Activated T-helper 1 cell treated with anti-CD3 and anti-CD28 coated beads, Interleukin-12 subunit alpha, Interleukin-12 subunit beta, Interleukin-2, Interleukin-4 antibody, amounts not matched to agents 30 ng/mL and 10 ng/mL and 1 ng/mL, durations not matched to agents 14 hours and 24 hours and 36 hours (primary cell): ENCODE measurements at regions of chr11 and their contacts with region 1.

Region 1: GRCh38 chr11:95067039-95067840 is 521 bp downstream of the SRSF8 start:
- DNase-seq: peak; percentile 72
- H3K4me3 Mint-ChIP-seq: peak overlapping the region; percentile 95
- H3K27ac Mint-ChIP-seq: peak overlapping the region; percentile 96
- H3K4me1 Mint-ChIP-seq: peaks cover 28% of the 10 kb centered on the region
- H3K27me3 Mint-ChIP-seq: peaks cover 23% of the 10 kb centered on the region

Region 2: GRCh38 chr11:94134651-94135512 is 932.4 kb before region 1 on chr11:
- intact Hi-C with region 1: loop called (anchors 10 kb)
- DNase-seq: peak; percentile 9
- H3K4me3 Mint-ChIP-seq: peak overlapping the region; percentile 60
- H3K27ac Mint-ChIP-seq: peak overlapping the region; percentile 45
- H3K4me1 Mint-ChIP-seq: peaks cover 48% of the 10 kb centered on the region
- H3K27me3 Mint-ChIP-seq: no peaks in the 10 kb centered on the region

Region 3: GRCh38 chr11:94543695-94544645 is 523.3 kb before region 1 on chr11 and contains the start of gene FUT4:
- intact Hi-C with region 1: loop called (anchors 5 kb)
- DNase-seq: peak; percentile 70
- H3K4me3 Mint-ChIP-seq: peak within 1 kb of the TSS; percentile 98
- H3K27ac Mint-ChIP-seq: peak within 1 kb of the TSS; percentile 99
- H3K4me1 Mint-ChIP-seq: peaks cover 45% of the 10 kb centered on the region
- H3K27me3 Mint-ChIP-seq: peaks cover 5% of the 10 kb centered on the region
- total RNA-seq, gene FUT4: 8.0 and 8.6 TPM in 2 replicates

Region 4: DNA sequence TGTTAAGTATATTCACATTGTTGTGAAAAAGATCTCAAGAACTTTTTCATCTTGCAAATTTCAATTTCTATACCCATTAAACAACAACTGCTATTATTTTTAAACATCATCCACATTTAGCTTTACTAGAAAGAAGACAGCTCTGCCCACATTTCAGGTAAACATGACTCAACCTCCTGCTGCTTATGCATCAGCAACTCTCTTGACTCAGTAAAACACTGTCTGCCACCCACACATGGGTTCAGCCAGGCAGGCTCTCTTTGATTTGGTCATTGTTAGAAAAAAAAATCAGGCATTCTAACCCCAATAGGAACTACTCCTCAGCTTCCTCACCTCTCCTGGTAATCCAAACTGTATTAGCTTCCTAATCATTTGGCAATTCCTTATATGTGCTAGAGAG is 17.3 kb after region 1 on chr11:
- intact Hi-C with region 1: loop called (anchors 1 kb)
- DNase-seq: peak; percentile 32
- H3K4me3 Mint-ChIP-seq: no peak overlapping the region
- H3K27ac Mint-ChIP-seq: peak overlapping the region; percentile 40
- H3K4me1 Mint-ChIP-seq: peaks cover 70% of the 10 kb centered on the region
- H3K27me3 Mint-ChIP-seq: no peaks in the 10 kb centered on the region

Region 5: GRCh38 chr11:95138448-95138847 is 71.2 kb after region 1 on chr11:
- intact Hi-C with region 1: loop called (anchors 1 kb)
- DNase-seq: no peak
- H3K4me3 Mint-ChIP-seq: no peak overlapping the region
- H3K27ac Mint-ChIP-seq: no peak overlapping the region
- H3K4me1 Mint-ChIP-seq: peaks cover 15% of the 10 kb centered on the region
- H3K27me3 Mint-ChIP-seq: peaks cover 8% of the 10 kb centered on the region

Region 6: GRCh38 chr11:95699631-95700470 is 632.6 kb after region 1 on chr11:
- intact Hi-C with region 1: loop called (anchors 5 kb)
- DNase-seq: no peak
- H3K4me3 Mint-ChIP-seq: peak overlapping the region; percentile 73
- H3K27ac Mint-ChIP-seq: peak overlapping the region; percentile 95
- H3K4me1 Mint-ChIP-seq: peaks cover 68% of the 10 kb centered on the region
- H3K27me3 Mint-ChIP-seq: no peaks in the 10 kb centered on the region

Region 7: GRCh38 chr11:96389720-96390487 is 1322.7 kb after region 1 on chr11 and contains the starts of genes CCDC82 and JRKL:
- intact Hi-C with region 1: loop called (anchors 1 kb)
- DNase-seq: peak; percentile 97
- H3K4me3 Mint-ChIP-seq: peak within 1 kb of the TSS; percentile 95
- H3K27ac Mint-ChIP-seq: peak within 1 kb of the TSS; percentile 85
- H3K4me1 Mint-ChIP-seq: peaks cover 64% of the 10 kb centered on the region
- H3K27me3 Mint-ChIP-seq: no peaks in the 10 kb centered on the region
- total RNA-seq, gene CCDC82: 28.5 and 29.9 TPM in 2 replicates
- total RNA-seq, gene JRKL: 9.6 and 10.2 TPM in 2 replicates